ENCODE measurements at regions of chr20 and their contacts with region 1.

Region 1: GRCh38 chr20:3888622-3889488 is at the start of gene PANK2:
- DNase-seq: peak; percentile 91 to 98
- H3K4me3 ChIP-seq: peak within 1 kb of the TSS; percentile 68 to 100 (median 96)
- H3K27ac ChIP-seq: peak within 1 kb of the TSS; percentile 95
- H3K4me1 ChIP-seq: peaks cover 0 to 8% (median 5%) of the 10 kb centered on the region in 4 experiments; a peak in 4 of 7 replicates
- H3K27me3 ChIP-seq: no peaks in the 10 kb centered on the region; a peak in 1 of 7 replicates
- CTCF ChIP-seq: peak; percentile 18 to 31 (median 20); a peak in 3 of 4 replicates
- EP300 ChIP-seq: no peak
- POLR2A ChIP-seq: peak; percentile 81 to 91
- RAD21 ChIP-seq: peak; percentile 22 to 40
- total RNA-seq, gene PANK2: 57.5 and 62.0 TPM in 2 replicates

Region 2: DNA sequence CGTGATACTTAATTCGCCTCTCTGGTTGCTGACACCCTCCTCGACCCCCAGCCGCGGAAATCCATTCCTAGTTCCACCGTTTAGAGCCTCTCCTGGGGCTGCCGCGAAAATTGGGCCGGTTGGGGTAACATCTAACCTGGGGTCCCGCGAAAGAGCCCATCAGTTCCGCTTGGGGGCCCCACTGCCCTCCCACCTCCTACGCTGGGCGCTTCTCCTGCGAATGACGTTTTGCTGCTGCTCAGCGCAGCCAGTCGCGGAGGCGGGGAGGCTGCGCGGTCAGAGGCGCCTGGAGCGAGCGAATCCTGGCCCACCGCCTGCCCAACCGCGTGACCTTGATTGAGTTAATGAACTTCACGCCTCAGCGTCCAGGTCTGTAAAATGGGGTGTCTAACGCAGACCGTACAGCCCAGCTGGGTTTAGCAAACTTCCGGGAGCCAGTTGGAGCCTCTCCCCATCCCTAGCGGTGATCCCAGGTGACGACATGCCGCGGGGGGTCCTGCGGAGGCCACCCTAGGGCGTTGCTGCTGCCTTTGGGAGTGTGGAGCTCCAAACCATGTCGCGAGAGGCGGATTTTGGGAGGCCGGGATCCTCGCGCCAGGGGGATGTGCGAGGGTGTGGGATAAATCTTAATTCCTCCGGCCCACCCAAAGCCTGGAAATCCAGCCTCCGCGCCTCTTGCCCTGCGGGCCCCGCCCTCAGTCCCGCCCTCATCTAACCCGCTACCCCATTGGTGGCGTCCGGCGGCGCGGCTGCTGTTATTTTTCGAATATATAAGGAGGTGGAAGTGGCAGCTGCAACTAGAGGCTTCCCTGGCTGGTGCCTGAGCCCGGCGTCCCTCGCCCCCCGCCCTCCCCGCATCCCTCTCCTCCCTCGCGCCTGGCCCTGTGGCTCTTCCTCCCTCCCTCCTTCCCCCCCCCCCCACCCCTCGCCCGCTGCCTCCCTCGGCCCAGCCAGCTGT is 93.1 kb before region 1 on chr20 and contains the start of gene CDC25B:
- CTCF ChIA-PET with region 1: no interaction called
- POLR2A ChIA-PET with region 1: interaction called, 13 read pairs
- DNase-seq: peak; percentile 56 to 87
- H3K4me3 ChIP-seq: peak within 1 kb of the TSS; percentile 30 to 85 (median 75)
- H3K27ac ChIP-seq: peak within 1 kb of the TSS; percentile 61; the same call in 1 of the 2 replicates
- H3K4me1 ChIP-seq: peaks cover 5 to 32% (median 25%) of the 10 kb centered on the region in 4 experiments
- H3K27me3 ChIP-seq: peaks cover 0 to 3% (median 0%) of the 10 kb centered on the region in 4 experiments; a peak in 1 of 7 replicates
- CTCF ChIP-seq: peak in 2 of 3 experiments; percentile 23 to 45; a peak in 2 of 4 replicates
- EP300 ChIP-seq: no peak
- POLR2A ChIP-seq: no peak; a peak in 1 of 3 replicates
- RAD21 ChIP-seq: peak; percentile 17 to 32; a peak in 2 of 4 replicates
- total RNA-seq, gene CDC25B: 30.3 and 31.2 TPM in 2 replicates

Region 3: GRCh38 chr20:3875378-3875974 is 13.4 kb before region 1 on chr20:
- CTCF ChIA-PET with region 1: interaction called, 9 read pairs
- POLR2A ChIA-PET with region 1: interaction called, 16 read pairs
- DNase-seq: no peak
- H3K4me3 ChIP-seq: no peak overlapping the region
- H3K27ac ChIP-seq: no peak overlapping the region
- H3K4me1 ChIP-seq: no peaks in the 10 kb centered on the region
- H3K27me3 ChIP-seq: no peaks in the 10 kb centered on the region
- CTCF ChIP-seq: no peak
- EP300 ChIP-seq: no peak
- POLR2A ChIP-seq: no peak
- RAD21 ChIP-seq: no peak

Region 4: DNA sequence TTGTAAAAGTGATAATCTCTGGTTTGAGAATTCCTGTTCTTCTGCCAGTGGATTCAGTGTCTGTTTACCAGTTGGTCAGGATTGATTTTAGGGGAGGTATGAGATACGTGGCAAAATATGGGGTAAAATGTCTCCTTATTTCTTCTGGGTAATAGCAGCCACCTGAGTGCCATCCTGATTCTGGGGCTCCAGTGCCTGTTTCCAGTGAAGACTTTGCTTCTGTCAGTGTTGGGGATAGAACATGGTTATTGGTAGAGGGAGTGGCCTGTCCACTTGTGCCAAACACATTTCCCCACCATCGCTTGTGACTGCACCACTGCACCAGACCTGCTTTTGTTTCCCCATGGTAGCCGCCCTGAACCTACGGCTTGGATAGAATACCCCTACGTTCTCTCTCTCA is 16.0 kb after region 1 on chr20:
- CTCF ChIA-PET with region 1: interaction called, 3 read pairs
- POLR2A ChIA-PET with region 1: interaction called, 14 read pairs
- DNase-seq: no peak
- H3K4me3 ChIP-seq: no peak overlapping the region
- H3K27ac ChIP-seq: no peak overlapping the region
- H3K4me1 ChIP-seq: peaks cover 0 to 3% (median 0%) of the 10 kb centered on the region in 4 experiments; a peak in 1 of 7 replicates
- H3K27me3 ChIP-seq: no peaks in the 10 kb centered on the region
- CTCF ChIP-seq: no peak
- EP300 ChIP-seq: no peak
- POLR2A ChIP-seq: no peak
- RAD21 ChIP-seq: no peak

Region 5: DNA sequence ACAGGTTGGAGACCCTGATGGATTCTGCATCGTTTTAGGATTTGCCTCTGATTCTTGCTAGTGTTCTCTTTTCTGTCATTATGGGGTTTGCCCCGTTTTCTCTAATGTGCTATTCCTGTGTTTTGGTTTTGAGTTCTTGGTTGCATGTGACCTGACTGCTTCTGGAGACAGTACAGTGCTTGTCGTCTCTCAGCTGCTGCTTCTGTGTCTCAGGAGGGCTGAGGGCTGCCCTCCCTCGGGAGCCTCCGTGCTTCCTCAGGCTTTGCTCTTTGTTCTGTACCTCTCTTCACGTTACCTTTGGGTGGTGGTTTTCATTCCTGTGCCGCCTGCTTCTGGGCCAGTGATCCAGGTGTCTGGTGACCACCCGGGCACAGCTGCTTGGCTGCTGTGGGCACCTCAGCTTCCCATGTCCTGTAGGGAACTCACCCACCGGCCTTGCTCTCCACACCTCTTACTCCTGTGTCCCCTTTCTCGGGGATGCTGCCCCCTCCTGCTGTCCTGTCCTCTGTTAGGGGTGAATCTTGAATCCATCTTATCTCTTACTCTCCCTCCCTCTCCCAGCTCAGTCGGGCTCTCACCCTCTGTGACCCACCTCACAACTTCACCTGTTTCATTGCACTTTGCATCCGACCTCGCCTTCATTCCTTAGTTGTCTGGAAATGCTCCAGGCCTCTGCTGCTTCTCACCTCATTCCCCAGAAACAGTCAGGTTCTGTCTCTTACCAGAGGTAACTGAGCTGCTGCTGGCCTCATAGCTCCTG is 33.5 kb after region 1 on chr20:
- CTCF ChIA-PET with region 1: interaction called, 3 read pairs
- POLR2A ChIA-PET with region 1: interaction called, 10 read pairs
- DNase-seq: no peak
- H3K4me3 ChIP-seq: no peak overlapping the region
- H3K27ac ChIP-seq: no peak overlapping the region
- H3K4me1 ChIP-seq: peaks cover 0 to 14% (median 2%) of the 10 kb centered on the region in 4 experiments; a peak in 3 of 7 replicates
- H3K27me3 ChIP-seq: no peaks in the 10 kb centered on the region
- CTCF ChIP-seq: no peak
- EP300 ChIP-seq: no peak
- POLR2A ChIP-seq: no peak
- RAD21 ChIP-seq: no peak

Measured in H1 (cell line).